ENCODE measurements at regions of chr5 and their contacts with region 1.

Region 1: DNA sequence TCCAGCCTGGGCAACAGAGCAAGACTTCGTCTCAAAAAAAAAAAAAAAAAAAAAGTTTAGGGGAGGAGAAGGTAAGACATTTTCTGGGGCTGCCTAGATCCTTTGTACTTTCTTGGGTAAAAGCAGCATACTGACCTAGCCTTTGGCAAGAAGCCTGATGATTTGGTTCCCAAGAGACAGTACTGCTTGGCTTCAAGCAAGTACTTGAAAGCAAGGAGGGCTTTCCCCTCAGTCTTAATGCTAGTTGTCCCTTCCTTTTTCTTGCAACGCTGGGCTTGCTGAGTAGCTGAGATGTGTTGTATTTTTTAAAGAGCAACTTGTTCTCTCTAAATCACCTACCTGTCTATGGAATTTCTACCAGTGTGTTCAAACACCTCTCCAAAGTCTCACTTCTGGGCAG is 76.2 kb downstream of the INSYN2B start:
- DNase-seq: no peak
- H3K4me3 ChIP-seq: no peak overlapping the region
- H3K27ac ChIP-seq: no peak overlapping the region
- H3K4me1 ChIP-seq: no peaks in the 10 kb centered on the region
- H3K27me3 ChIP-seq: no peaks in the 10 kb centered on the region
- CTCF ChIP-seq: no peak
- EP300 ChIP-seq: no peak
- POLR2A ChIP-seq: no peak

Region 2: GRCh38 chr5:170681013-170681433 is 777.0 kb after region 1 on chr5:
- intact Hi-C with region 1: loop called in 1 of 4 experiments (anchors 5 kb)
- DNase-seq: no peak
- H3K4me3 ChIP-seq: no peak overlapping the region
- H3K27ac ChIP-seq: no peak overlapping the region
- H3K4me1 ChIP-seq: no peaks in the 10 kb centered on the region
- H3K27me3 ChIP-seq: no peaks in the 10 kb centered on the region
- CTCF ChIP-seq: no peak
- EP300 ChIP-seq: no peak
- POLR2A ChIP-seq: no peak

Measured in ovary (tissue), 10 donors.